ENCODE measurements at regions of chr11 and their contacts with region 1.

Region 1: DNA sequence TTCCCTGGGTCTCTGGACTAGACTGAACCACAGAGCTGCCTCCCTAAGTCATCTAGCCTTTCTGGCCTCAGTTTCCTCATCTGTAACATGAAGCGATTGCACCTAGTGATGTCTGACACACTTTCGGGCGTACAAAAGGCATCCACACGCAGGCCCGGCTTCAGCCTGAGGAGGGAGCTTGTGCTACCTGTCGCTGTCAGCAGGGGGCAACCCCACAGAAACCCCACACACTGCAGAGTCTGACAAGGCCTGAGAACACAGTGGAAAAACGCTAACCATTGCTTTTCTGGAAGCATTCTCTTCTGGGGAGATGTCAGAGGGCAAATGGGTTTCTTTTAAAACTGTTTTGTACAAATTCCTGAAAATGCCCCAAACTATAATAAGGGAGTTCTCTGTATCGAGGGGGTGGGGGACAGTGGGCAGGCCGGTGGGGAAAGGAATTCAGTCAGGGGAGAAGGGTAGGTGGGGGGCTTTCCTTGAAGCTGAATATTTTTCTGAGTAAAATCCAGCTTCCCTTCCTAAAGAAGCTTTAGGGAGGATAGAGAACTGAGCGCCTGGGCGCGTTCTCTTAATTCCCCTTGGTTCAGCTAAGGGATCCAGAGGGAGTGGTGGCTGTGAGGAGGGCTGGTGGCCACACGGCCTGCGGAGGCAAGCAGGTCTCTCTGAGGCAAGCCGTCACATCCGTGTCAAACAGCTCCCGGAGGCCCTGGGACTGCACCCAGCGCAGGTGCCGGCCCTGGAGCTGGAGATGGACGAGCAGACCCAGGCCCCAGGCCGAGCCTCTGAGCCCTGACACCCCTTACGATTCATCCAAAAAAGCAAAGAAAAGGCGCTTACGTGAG is 533 bp downstream of the ELF5 start:
- DNase-seq: peak; percentile 89
- H3K4me3 ChIP-seq: no peak overlapping the region
- H3K27ac ChIP-seq: no peak overlapping the region
- H3K4me1 ChIP-seq: no peaks in the 10 kb centered on the region
- H3K27me3 ChIP-seq: peaks cover 4% of the 10 kb centered on the region
- CTCF ChIP-seq: peak; percentile 98

Region 2: GRCh38 chr11:34890812-34891211 is 377.8 kb after region 1 on chr11:
- CTCF ChIA-PET with region 1: no interaction called
- POLR2A ChIA-PET with region 1: no interaction called
- intact Hi-C with region 1: loop called (anchors 2 kb)
- DNase-seq: peak; percentile 67
- H3K4me3 ChIP-seq: no peak overlapping the region
- H3K27ac ChIP-seq: no peak overlapping the region
- H3K4me1 ChIP-seq: no peaks in the 10 kb centered on the region
- H3K27me3 ChIP-seq: no peaks in the 10 kb centered on the region
- CTCF ChIP-seq: peak; percentile 74

Region 3: GRCh38 chr11:35412285-35412684 is 899.2 kb after region 1 on chr11:
- CTCF ChIA-PET with region 1: no interaction called
- POLR2A ChIA-PET with region 1: no interaction called
- intact Hi-C with region 1: loop called (anchors 5 kb)
- DNase-seq: peak; percentile 67
- H3K4me3 ChIP-seq: no peak overlapping the region
- H3K27ac ChIP-seq: no peak overlapping the region
- H3K4me1 ChIP-seq: no peaks in the 10 kb centered on the region
- H3K27me3 ChIP-seq: peaks cover 90% of the 10 kb centered on the region
- CTCF ChIP-seq: peak; percentile 81